ENCODE measurements at regions of chr11 and their contacts with region 1.

Region 1: GRCh38 chr11:72460091-72460647 is 25.8 kb upstream of the CLPB start:
- DNase-seq: no peak
- H3K4me3 ChIP-seq: no peak overlapping the region
- CTCF ChIP-seq: no peak

Region 2: DNA sequence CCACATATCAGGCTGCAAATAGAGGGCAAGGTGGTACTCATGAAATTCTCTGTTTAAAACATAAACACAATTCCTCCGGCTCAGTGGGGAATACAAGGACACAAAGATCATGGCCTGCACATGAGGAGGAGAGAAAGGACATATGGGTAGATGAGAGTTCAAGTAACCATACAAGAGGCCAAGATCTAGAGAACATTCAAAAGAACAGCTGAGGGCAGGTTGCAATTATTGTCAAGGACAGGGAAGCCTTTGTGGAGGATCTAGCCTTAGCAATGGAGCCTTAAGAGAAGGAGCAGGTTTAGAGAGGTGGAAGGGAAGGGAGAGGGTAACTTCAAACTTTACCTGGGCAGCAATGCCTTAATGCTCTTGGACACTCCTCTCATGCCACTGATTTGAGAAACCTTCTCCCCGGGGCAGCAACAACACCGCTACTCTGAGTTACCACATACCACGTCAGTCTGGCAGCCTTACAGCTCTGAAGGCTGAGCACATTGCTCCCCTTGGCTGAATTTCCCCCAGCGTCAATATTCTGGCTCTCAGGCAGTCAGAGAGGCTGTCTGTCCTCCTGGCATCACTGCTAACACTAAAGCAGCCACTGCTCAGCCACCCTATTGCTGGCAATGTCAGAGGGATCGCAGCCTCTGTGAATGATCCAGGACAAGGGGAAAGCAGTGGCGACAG is 81.3 kb before region 1 on chr11:
- CTCF ChIA-PET with region 1: no interaction called
- POLR2A ChIA-PET with region 1: no interaction called
- DNase-seq: no peak
- H3K4me3 ChIP-seq: no peak overlapping the region
- CTCF ChIP-seq: no peak

Region 3: DNA sequence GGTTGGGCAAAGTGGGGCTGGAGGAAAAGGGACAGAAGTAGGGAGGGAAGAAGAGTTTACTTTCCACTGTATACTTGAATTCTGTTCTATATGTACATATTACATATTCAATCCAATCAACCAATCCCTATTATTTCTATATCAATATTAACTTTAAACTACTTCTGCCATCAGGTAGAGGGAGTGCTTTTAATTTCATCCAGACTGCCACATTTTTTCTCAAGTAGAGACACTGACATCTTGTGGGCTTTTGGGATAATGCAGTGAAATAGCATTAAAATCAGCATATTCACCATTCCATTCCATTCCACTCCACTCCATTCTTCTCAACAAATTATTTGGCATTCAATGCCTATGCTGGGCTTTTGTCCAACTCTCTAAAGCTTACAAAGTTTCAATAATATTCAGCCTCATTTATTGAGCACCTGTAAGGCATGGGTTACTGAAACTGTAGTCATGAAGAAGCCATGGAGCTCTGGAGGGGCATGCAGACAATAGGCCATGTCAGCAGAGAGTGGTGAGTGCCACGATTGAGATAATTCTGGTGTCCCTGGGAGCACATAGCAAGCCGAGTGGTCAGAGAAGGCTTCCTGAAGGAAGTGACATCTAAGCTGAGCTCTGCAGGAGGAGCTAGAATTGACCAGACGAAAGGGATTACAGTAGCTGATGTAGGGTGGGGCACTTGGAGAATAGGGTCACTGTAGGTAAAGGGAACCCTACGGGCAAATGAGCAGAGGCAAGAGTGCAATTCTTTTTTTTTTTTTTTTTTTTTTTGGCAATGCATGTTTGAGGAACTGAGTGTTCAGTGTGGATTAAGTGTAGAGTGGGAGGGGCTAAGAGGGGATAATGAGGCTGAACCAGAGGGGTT is 13.0 kb before region 1 on chr11:
- CTCF ChIA-PET with region 1: interaction called, 36 read pairs
- POLR2A ChIA-PET with region 1: no interaction called
- DNase-seq: no peak
- H3K4me3 ChIP-seq: no peak overlapping the region
- CTCF ChIP-seq: peak; percentile 56

Measured in AG04449 (cell line).